GM10248 (cell line): ENCODE measurements at regions of chr1 and their contacts with region 1.

Region 1: GRCh38 chr1:25037174-25038074 is 107.3 kb upstream of the RUNX3 start:
- DNase-seq: peak; percentile 77
- CTCF ChIP-seq: peak; percentile 86

Region 2: GRCh38 chr1:24923485-24924113 is 113.8 kb before region 1 on chr1:
- CTCF ChIA-PET with region 1: interaction called, 23 read pairs
- POLR2A ChIA-PET with region 1: no interaction called
- DNase-seq: peak; percentile 76
- CTCF ChIP-seq: no peak

Region 3: GRCh38 chr1:24946861-24947658 is 90.4 kb before region 1 on chr1:
- CTCF ChIA-PET with region 1: interaction called, 40 read pairs
- POLR2A ChIA-PET with region 1: interaction called, 5 read pairs
- DNase-seq: peak; percentile 86
- CTCF ChIP-seq: no peak

Region 4: DNA sequence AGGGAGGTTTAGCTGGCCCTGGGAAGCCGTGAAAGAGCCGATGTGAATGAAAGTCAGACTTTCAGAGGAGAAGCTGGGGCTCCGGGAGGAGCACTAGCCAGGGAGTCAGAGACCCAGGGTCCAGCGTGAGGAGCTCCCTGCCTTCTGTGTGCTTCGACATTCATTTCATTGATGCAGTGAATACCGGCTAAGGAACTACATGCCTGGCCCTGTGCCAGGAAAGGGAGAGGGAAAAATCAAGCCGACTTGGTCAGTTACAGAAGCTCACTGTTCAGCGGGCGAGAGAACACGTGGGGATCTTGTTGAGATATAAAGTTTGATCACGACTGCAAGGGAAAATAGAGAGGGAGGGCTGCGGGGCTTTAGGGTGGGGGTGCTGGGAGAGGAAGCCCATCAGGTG is 30.7 kb before region 1 on chr1:
- CTCF ChIA-PET with region 1: interaction called, 11 read pairs
- POLR2A ChIA-PET with region 1: no interaction called
- DNase-seq: no peak
- CTCF ChIP-seq: no peak

Region 5: GRCh38 chr1:25051504-25051903 is 14.1 kb after region 1 on chr1:
- CTCF ChIA-PET with region 1: interaction called, 60 read pairs
- POLR2A ChIA-PET with region 1: no interaction called
- DNase-seq: no peak
- CTCF ChIP-seq: no peak